HepG2 (cell line): ENCODE measurements at regions of chr14 and their contacts with region 1.

Region 1: GRCh38 chr14:39258782-39259545 is 25.2 kb downstream of the MIA2 start:
- DNase-seq: no peak
- ATAC-seq: peak; percentile 89
- H3K4me3 ChIP-seq: no peak overlapping the region
- H3K27ac ChIP-seq: no peak overlapping the region
- H3K4me1 ChIP-seq: peaks cover 13% of the 10 kb centered on the region
- H3K27me3 ChIP-seq: no peaks in the 10 kb centered on the region
- CTCF ChIP-seq: no peak
- EP300 ChIP-seq: no peak
- POLR2A ChIP-seq: no peak
- RAD21 ChIP-seq: no peak

Region 2: DNA sequence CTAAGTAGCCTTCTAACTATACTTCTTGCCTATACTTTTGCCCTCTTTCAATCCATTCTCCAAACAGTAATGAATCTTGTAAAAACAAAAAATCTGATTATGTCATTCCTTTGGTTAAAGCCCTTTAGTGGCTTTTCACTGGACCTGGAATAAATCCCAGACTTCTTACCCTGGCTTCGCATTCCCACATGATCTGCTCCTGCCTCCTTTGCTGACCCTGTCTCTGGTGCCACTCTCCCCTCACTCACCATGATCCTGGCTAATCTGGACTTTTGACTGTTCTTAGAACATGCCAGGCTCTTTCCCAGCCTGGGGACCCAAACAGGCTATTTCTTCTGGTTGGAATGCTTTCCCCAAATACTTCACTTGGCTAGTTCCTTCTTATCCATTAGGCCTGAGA is 17.3 kb before region 1 on chr14:
- CTCF ChIA-PET with region 1: no interaction called
- POLR2A ChIA-PET with region 1: no interaction called
- in situ Hi-C with region 1: no loop called
- intact Hi-C with region 1: loop called (anchors 2 kb)
- DNase-seq: no peak
- ATAC-seq: no peak
- H3K4me3 ChIP-seq: no peak overlapping the region
- H3K27ac ChIP-seq: no peak overlapping the region
- H3K4me1 ChIP-seq: peaks cover under 1% of the 10 kb centered on the region
- H3K27me3 ChIP-seq: no peaks in the 10 kb centered on the region; a peak in 1 of 5 replicates
- CTCF ChIP-seq: no peak
- EP300 ChIP-seq: no peak
- POLR2A ChIP-seq: no peak
- RAD21 ChIP-seq: no peak